Sigmoid colon (tissue), 7 donors: ENCODE measurements at regions of chr20 and their contacts with region 1.

Region 1: GRCh38 chr20:2101865-2102584 is 398 bp downstream of the STK35 start:
- DNase-seq: peak; percentile 95
- H3K4me3 ChIP-seq: peak overlapping the region; percentile 70 to 86 (median 83)
- H3K27ac ChIP-seq: peak overlapping the region; percentile 94 to 98 (median 98)
- H3K4me1 ChIP-seq: peaks cover 3 to 45% (median 38%) of the 10 kb centered on the region in 4 donors
- H3K27me3 ChIP-seq: no peaks in the 10 kb centered on the region
- CTCF ChIP-seq: peak in 1 of 4 experiments; percentile 21
- EP300 ChIP-seq: peak in 1 of 4 donors; percentile 4
- POLR2A ChIP-seq: no peak

Region 2: DNA sequence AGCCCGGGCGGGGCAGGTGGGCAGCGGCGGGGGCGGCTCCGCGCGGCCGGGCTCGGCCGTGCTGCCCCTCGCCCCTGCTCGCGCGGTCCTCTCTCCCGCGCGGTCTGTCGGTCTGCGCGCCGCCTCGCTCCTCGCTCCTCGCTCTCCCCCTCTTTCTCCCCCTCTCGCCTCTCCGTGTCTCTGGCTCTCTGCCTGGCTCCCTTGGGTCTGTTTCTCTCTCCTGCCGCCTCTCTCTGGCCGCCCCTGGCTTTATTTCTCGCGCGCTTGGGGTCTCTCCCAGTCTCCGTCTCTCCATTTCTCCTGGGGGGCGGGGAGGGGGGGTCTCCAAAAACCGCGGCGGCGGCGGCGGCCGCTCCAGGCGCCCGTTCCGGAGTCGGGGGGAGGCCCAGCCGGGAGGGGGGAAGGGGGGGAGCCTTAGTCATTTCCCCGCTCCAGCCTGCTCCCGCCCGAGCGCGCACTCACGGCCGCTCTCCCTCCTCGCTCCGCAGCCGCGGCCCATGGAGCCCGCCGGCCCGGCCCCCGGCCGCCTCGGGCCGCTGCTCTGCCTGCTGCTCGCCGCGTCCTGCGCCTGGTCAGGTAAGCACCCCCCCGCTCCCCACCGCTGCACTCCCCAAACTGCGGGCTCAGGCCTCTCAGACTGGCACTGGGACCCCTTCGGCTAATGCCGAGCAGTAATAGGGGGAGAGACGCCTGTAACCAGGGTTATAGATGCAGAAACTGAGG is 206.9 kb before region 1 on chr20 and contains the start of gene SIRPA:
- intact Hi-C with region 1: loop called (anchors 5 kb)
- DNase-seq: peak; percentile 88
- H3K4me3 ChIP-seq: peak within 1 kb of the TSS; percentile 72 to 87 (median 76)
- H3K27ac ChIP-seq: peak within 1 kb of the TSS; percentile 93 to 94 (median 94)
- H3K4me1 ChIP-seq: peaks cover 0 to 68% (median 58%) of the 10 kb centered on the region in 4 donors
- H3K27me3 ChIP-seq: no peaks in the 10 kb centered on the region
- CTCF ChIP-seq: no peak
- EP300 ChIP-seq: no peak
- POLR2A ChIP-seq: no peak
- total RNA-seq, gene SIRPA: 16.3 to 25.5 (median 21.5) TPM

Region 3: DNA sequence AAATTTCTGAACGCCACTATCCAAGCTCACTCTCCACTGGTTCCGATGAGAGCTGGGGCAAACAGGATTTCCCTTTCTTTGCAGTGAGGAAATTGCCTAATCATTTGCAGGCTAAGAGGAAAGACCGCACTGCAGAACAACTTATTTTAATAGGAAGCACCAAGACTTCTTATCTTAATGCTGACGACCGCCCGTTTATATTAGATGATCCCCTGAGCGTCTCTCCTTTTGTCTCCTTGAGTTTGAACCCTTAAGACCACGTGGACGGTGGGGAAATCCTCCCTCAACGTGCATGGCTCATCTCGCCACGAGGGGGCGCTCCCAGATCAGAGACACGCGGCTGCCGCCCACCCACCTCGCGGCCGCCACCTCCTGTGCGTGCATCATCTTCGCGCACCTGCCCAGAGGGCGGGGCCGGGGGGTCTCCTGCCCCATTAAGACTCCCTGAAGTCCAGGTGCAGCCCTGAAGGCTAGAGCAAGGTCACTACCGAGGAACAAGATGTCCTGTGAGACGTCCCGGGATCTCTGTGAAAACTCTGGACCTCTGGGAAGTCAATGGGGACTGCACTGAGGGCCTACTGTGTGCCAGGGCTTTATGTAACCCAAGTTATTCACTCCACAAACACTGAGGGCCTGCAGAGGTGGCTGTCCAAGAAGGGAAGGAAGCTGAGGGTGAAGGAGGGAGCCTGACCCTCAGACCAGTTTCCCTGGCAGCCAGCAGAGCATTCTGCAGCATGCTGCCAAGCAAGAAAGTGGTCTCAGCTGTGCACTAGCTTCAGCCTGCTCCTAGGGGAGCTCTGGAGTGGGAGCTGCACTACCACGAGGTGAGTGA is 136.3 kb before region 1 on chr20:
- intact Hi-C with region 1: loop called (anchors 5 kb)
- DNase-seq: peak; percentile 86
- H3K4me3 ChIP-seq: peak overlapping the region in 1 of 4 donors; percentile 9
- H3K27ac ChIP-seq: no peak overlapping the region
- H3K4me1 ChIP-seq: peaks cover 0 to 9% (median 8%) of the 10 kb centered on the region in 4 donors
- H3K27me3 ChIP-seq: peaks cover 0 to 2% (median 0%) of the 10 kb centered on the region in 3 donors
- CTCF ChIP-seq: peak; percentile 81 to 93 (median 92)
- EP300 ChIP-seq: no peak
- POLR2A ChIP-seq: no peak

Region 4: DNA sequence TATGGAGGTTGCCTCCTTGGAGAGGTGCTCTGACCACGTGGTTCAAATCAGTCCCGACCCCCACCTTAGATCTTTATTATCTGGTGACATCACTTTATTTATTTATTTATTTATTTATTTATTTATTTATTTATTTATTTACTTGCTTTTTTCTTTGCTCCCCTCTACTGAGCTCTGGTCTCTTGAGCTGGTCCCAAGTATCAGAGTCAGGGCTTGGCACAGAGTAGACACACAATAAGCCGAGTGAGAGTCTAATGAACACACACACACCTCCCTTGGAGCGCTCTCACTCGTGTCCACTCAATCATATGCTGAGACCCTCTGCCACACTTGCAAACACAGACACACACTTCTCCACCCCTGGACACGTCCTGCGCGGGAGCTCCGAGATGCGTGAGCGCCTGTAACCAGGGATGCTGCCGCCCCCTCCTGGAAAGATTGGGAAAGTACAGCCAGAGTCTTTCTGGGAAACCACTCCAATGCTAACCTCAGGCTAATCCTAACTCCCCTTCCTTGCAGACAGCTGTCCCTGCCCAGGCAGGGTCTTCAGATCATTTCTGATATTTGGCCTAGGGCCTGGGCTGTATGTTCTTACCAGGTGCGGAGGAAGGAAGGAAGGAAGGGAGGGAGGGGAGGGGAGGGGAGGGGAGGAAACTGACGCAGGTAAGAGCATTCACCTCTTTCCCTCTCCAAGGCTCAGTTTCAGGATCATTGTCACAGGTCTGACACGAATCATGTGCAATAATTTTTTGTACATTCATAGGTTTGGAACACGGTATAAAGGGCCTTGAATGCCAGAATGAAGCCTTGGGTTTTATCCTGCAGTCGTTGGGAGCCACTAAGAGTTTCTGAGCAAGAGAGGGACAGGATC is 70.5 kb after region 1 on chr20:
- intact Hi-C with region 1: loop called (anchors 5 kb)
- DNase-seq: peak; percentile 87
- H3K4me3 ChIP-seq: no peak overlapping the region
- H3K27ac ChIP-seq: no peak overlapping the region
- H3K4me1 ChIP-seq: peaks cover 0 to 4% (median 2%) of the 10 kb centered on the region in 4 donors
- H3K27me3 ChIP-seq: peaks cover 0 to 5% (median 0%) of the 10 kb centered on the region in 3 donors
- CTCF ChIP-seq: peak; percentile 90 to 92 (median 91)
- EP300 ChIP-seq: no peak
- POLR2A ChIP-seq: no peak

Region 5: DNA sequence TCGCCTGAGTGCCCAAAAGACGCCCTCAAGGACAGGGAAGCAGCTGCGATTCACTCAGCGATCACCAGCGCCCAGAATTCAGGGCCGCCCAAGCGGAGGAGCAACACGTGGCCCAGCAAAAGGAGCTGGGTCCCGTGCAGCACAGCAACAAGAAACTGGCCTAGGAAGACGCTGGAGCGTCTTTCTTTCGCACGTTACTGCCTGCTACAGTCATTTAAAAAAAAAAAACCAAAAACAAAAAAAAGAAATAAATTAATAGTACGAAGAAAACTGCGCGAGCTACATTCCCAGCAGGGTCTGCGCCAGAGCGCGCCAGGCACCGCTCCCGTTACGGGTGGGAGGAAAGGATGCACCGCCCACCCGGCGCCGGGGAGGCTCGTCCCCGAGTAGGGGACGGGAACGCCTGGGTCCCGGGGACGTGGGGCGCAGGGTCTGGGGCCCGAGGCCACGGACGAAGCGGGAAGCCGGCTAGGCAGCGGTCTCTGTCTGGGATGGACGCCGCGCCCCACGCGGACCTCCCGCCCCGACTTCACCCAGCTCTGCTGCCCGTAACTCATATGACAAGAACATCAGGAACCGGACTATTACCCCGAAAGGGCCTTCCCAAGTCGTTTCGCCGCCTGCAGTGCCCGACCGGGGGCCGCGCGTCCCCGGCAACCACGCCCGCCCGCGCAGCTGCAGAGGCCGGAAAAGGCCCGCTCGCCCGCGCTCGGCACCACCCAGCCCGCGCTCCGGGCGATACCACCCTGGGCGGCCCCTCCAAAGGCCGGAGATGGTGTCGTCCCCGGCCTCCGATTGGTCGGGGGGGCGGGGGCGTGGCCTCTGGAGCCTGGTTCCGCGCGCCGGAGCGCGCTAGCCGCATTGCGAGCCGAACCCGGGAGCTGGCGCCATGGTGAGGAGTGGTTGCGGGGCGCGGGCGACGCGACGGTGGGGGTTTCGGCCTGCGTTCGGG is 550.0 kb after region 1 on chr20 and contains the start of gene NOP56:
- intact Hi-C with region 1: loop called (anchors 5 kb)
- DNase-seq: peak; percentile 95
- H3K4me3 ChIP-seq: peak within 1 kb of the TSS; percentile 67 to 97 (median 90)
- H3K27ac ChIP-seq: peak within 1 kb of the TSS; percentile 87 to 96 (median 92)
- H3K4me1 ChIP-seq: peaks cover 0 to 31% (median 21%) of the 10 kb centered on the region in 4 donors
- H3K27me3 ChIP-seq: no peaks in the 10 kb centered on the region
- CTCF ChIP-seq: no peak
- EP300 ChIP-seq: peak in 1 of 4 donors; percentile 1
- POLR2A ChIP-seq: peak in 1 of 2 donors; percentile 27
- total RNA-seq, gene NOP56: 53.2 to 69.8 (median 65.2) TPM